Endothelial cell of umbilical vein (primary cell): ENCODE measurements at regions of chr14 and their contacts with region 1.

Region 1: GRCh38 chr14:35385042-35385839 is 19.3 kb downstream of the NFKBIA start:
- DNase-seq: peak; percentile 37
- H3K4me3 ChIP-seq: no peak overlapping the region
- H3K27ac ChIP-seq: peak overlapping the region; percentile 76
- H3K4me1 ChIP-seq: peaks cover 24% of the 10 kb centered on the region
- H3K27me3 ChIP-seq: no peaks in the 10 kb centered on the region
- CTCF ChIP-seq: no peak
- POLR2A ChIP-seq: no peak

Region 2: GRCh38 chr14:35365130-35366055 is 19.8 kb before region 1 on chr14:
- CTCF ChIA-PET with region 1: interaction called, 5 read pairs
- POLR2A ChIA-PET with region 1: no interaction called
- dilution Hi-C with region 1: no loop called
- intact Hi-C with region 1: loop called (anchors 1 kb)
- DNase-seq: peak; percentile 84
- H3K4me3 ChIP-seq: no peak overlapping the region
- H3K27ac ChIP-seq: peak overlapping the region; percentile 31
- H3K4me1 ChIP-seq: peaks cover 27% of the 10 kb centered on the region
- H3K27me3 ChIP-seq: no peaks in the 10 kb centered on the region
- CTCF ChIP-seq: no peak
- POLR2A ChIP-seq: no peak

Region 3: DNA sequence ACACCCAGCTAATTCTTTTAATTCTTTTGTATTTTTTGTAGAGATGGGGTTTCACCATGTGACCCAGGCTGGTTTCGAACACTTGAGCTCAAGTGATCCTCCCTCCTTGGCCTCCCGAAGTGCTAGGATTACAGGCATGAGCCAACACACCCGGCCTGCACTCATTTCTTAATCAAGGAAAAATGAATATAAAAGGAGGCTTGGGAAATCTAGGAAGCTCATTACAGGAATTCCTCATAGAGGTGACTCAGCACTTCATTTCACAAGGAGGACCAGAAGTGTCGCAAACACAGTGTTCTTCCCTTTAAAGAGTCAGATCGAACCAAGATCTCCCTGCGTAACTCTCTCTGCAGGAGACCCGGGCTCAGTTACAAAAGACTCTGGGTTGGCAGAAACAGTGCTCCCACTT is 11.0 kb before region 1 on chr14:
- CTCF ChIA-PET with region 1: interaction called, 11 read pairs
- POLR2A ChIA-PET with region 1: interaction called, 8 read pairs
- dilution Hi-C with region 1: no loop called
- intact Hi-C with region 1: no loop called
- DNase-seq: peak; percentile 36
- H3K4me3 ChIP-seq: no peak overlapping the region
- H3K27ac ChIP-seq: no peak overlapping the region
- H3K4me1 ChIP-seq: peaks cover 4% of the 10 kb centered on the region
- H3K27me3 ChIP-seq: no peaks in the 10 kb centered on the region
- CTCF ChIP-seq: no peak
- POLR2A ChIP-seq: no peak